Right ventricle myocardium superior (tissue), 1 donor: ENCODE measurements at regions of chr10 and their contacts with region 1.

Region 1: DNA sequence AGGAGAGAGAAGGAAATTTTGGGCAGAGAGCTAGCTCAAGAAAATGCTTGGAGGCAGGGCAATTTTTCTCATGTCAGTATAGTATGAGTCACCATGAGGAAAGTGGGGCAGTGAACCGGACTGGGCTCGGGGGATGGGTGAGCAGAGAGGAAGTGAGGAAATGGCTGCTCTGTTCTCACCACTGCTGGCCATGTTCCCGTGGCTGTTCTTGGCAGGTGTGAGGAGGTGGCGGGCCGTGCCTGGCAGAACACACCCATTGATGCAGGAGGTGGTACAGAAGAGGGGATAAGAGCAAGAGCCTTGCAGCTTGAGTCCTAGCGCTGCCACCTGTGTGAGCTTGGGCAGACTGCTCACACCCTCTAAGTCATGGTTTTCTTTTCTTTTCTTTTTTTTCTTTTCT is 304.4 kb upstream of the LYZL1 start:
- DNase-seq: peak; percentile 92
- ATAC-seq: peak; percentile 97

Region 2: DNA sequence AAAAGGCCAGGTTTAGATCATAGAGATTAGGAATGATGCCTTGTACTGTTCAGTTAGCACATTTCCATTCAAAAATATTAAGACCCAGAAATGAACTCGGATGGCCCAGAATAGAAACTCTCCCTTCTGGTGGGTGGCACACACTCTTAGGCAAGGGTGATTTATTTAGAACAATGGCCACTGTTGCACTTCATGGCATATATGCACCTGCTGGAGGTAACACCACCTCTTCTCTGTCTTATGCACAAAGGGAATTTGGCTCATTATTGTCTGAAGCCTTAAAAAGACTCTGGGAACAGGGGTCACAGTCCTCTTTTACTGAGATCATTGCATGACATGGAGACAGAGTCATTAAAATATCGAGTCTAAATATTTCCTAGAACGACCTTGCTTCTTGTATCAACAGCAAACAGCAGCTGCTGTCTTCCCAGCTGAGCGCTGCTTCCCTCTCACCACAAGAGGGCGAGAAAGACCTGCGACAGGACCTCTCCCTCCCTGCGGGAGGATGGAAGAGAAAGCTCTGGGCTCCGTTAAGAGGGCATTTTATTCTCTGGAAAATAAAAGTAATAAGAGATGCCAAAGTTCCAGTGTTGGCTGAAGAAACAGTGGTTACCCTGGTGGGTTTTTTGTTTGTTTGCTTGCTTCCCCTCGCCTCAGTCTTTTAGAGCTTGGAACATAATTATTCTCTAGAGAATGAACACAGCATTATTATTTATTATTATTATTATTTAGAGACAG is 320.7 kb before region 1 on chr10:
- intact Hi-C with region 1: no loop called
- DNase-seq: peak; percentile 77
- ATAC-seq: peak; percentile 97

Region 3: GRCh38 chr10:28839600-28840007 is 144.8 kb before region 1 on chr10:
- intact Hi-C with region 1: loop called (anchors 5 kb)
- DNase-seq: peak; percentile 45
- ATAC-seq: peak; percentile 93

Region 4: GRCh38 chr10:29007748-29008610 is 23.5 kb after region 1 on chr10:
- intact Hi-C with region 1: no loop called
- DNase-seq: peak; percentile 57
- ATAC-seq: peak; percentile 51